Activated T-helper 1 cell treated with anti-CD3 and anti-CD28 coated beads, Interleukin-12 subunit alpha, Interleukin-12 subunit beta, Interleukin-2, Interleukin-4 antibody, amounts not matched to agents 30 ng/mL and 10 ng/mL and 1 ng/mL, durations not matched to agents 14 hours and 24 hours and 36 hours (primary cell): ENCODE measurements at regions of chr5 and their contacts with region 1.

Region 1: GRCh38 chr5:157731272-157732129 is at the start of gene THG1L:
- DNase-seq: peak; percentile 97
- H3K4me3 Mint-ChIP-seq: peak within 1 kb of the TSS; percentile 88
- H3K27ac Mint-ChIP-seq: peak within 1 kb of the TSS; percentile 97
- H3K4me1 Mint-ChIP-seq: peaks cover 37% of the 10 kb centered on the region
- H3K27me3 Mint-ChIP-seq: no peaks in the 10 kb centered on the region
- total RNA-seq, gene THG1L: 26.8 and 30.1 TPM in 2 replicates

Region 2: DNA sequence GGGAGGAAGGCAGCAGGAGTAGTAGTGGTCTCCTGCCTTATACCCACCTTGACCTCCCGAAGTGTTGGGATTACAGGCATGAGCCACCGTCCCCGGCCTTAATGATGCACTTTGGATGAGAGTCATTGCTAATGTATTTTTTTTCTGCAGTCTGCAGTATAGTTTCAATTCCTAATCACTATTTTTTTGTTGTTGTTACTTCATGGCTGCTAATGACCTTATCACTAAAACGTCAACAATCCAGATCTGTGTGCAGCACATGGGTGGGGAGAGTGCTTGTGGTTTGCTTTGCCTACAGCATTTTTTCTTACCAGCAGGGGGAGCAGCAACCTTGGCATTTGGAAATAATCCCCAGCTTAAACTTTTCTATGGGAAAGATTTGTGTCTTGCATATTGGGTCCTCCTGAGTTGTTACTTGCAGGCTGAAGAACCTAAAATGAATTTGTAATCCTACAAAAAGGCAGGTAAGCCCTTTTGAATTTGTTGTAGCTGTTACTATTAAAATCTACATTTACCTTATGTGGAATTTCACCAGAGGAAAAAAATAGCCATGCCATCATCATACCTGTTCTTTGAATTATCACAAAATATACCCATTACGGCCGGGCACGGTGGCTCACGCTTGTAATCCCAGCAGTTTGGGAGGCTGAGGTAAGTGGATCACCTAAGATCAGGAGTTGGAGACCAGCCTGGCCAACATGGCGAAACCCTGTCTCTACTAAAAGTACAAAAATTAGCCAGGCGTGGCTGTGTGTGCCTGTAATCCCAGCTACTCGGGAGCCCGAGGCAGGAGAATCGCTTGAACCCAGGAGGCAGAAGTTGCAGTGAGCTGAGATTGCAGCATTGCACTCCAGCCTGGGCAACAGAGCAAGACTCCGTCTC is 582.5 kb before region 1 on chr5:
- intact Hi-C with region 1: no loop called
- DNase-seq: peak; percentile 74
- H3K4me3 Mint-ChIP-seq: no peak overlapping the region
- H3K27ac Mint-ChIP-seq: peak overlapping the region; percentile 67
- H3K4me1 Mint-ChIP-seq: peaks cover 43% of the 10 kb centered on the region
- H3K27me3 Mint-ChIP-seq: no peaks in the 10 kb centered on the region

Region 3: DNA sequence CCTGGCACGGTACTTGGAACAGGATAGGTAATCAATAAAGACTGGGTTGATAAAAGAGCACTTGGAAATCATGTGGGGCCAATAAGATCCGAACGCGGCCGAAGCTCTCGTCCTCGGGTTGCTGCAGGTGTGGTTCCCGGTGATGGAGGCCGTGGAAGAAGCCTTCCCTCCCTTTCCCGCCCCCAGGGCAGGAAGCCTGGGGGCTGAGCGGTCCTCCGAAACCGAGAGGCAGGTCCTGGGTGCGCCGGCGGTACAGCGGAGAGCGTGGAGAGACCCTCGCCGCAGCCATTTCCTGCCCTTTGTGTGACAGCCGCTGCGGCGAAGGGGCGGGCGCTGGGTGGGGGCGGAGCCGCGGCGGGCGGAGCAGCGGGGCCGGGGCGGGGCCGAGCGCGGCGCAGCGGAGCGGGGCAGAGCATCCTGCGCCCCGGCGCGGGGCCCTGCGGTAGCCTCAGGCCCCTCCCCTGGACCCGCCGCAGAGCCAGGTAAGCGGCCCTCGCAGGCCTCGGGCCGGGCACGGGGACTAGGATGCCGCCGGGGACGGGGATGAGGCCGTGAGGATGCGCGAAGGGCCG is 465.7 kb before region 1 on chr5 and contains the start of gene CYFIP2:
- intact Hi-C with region 1: loop called (anchors 5 kb)
- DNase-seq: peak; percentile 82
- H3K4me3 Mint-ChIP-seq: peak within 1 kb of the TSS; percentile 93
- H3K27ac Mint-ChIP-seq: peak within 1 kb of the TSS; percentile 95
- H3K4me1 Mint-ChIP-seq: peaks cover 78% of the 10 kb centered on the region
- H3K27me3 Mint-ChIP-seq: no peaks in the 10 kb centered on the region
- total RNA-seq, gene CYFIP2: 173 and 175 TPM in 2 replicates

Region 4: GRCh38 chr5:157575381-157576020 is 156.0 kb before region 1 on chr5 and contains the start of gene ADAM19:
- intact Hi-C with region 1: loop called (anchors 2 kb)
- DNase-seq: peak; percentile 58
- H3K4me3 Mint-ChIP-seq: peak within 1 kb of the TSS; percentile 96
- H3K27ac Mint-ChIP-seq: peak within 1 kb of the TSS; percentile 92
- H3K4me1 Mint-ChIP-seq: peaks cover 64% of the 10 kb centered on the region
- H3K27me3 Mint-ChIP-seq: no peaks in the 10 kb centered on the region
- total RNA-seq, gene ADAM19: 341 and 348 TPM in 2 replicates

Region 5: DNA sequence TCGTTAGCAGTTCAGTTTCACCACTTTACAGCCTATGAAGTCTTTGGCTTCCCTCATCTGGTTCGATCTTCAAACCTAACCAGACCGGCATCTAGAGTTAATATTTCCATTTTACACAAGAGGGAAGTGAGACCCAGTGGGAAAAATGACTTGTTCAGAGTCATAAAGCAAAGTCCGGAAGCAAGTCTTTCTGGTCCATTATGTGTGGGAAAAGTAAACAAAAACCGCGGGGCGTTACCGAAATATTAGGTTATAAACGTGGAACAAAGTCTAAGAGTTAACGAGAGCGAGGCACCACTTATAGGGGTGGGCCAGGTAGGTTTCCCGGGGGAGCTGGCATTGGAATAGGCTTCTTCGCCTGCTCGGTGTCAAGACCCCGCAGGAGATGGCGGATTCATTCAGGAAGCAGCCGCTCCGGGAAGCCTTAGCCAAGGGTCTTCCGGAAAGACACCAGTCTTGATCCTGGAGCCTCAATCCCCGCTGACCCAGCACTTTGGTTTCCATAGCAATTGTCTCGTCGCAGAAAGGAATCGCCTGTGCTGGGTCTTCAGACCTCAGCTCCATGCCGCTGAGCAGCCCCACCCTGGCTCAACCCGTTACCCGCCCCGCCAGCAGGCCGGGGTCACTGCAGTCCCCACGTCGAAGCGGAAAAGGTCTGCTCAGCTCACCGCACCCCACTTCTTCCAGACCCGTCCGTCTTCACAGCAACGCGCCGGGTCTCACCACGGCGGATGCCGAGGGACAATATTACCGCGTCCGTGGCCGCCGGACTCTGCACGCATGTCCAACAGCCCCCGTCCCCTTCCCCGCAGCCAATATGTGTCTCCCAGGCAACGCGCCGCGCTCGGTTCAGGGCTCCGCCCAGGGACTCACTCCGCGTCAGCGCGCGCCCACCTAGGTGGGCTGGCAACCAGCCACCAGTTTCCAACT is 60.6 kb before region 1 on chr5 and contains the start of gene C5orf52:
- intact Hi-C with region 1: loop called (anchors 1 kb)
- DNase-seq: no peak
- H3K4me3 Mint-ChIP-seq: peak within 1 kb of the TSS; percentile 93
- H3K27ac Mint-ChIP-seq: peak within 1 kb of the TSS; percentile 82
- H3K4me1 Mint-ChIP-seq: peaks cover 42% of the 10 kb centered on the region
- H3K27me3 Mint-ChIP-seq: peaks cover 2% of the 10 kb centered on the region
- total RNA-seq, gene C5orf52: 0.39 TPM in 1 of 2 replicates, not detected in the other

Region 6: DNA sequence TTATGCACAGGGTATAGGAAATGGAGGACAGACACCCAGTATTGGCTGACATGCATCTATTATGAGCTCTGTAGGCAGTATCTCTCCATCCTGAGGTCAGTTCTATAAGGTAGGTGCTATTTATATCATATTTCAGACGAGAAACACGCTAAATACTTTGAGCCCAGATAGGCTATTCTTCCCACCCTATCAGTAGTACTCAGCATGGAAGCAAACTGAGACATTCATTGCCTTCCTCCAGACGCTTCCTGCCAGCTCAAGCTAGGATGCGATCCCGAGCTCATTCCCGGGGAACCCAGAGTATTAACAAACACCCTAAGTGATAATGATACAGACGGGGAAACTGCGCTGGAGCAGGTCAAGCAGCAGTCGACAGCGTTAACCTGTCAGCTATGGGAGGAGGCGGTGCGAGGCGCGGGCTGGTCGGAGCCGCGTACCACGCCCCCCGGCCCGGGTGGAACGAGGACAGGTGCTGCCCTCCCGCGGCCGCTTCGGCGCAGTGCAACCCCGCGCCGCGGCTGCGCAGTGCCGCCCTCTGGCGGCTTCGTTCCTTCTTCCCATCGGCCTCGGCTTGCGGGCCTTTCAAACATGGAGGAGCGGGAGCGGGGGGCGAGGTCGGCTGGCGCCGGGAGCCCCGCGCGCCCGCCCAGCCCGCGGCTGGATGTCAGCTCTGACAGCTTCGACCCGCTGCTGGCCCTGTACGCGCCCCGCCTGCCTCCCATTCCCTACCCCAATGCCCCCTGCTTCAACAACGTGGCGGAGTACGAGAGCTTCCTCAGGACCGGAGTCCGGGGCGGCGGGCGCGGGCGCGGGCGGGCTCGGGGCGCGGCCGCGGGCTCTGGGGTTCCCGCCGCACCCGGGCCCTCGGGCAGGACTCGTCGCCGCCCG is 11.9 kb after region 1 on chr5 and contains the start of gene LSM11:
- intact Hi-C with region 1: loop called (anchors 1 kb)
- DNase-seq: peak; percentile 90
- H3K4me3 Mint-ChIP-seq: peak within 1 kb of the TSS; percentile 98
- H3K27ac Mint-ChIP-seq: peak within 1 kb of the TSS; percentile 93
- H3K4me1 Mint-ChIP-seq: peaks cover 46% of the 10 kb centered on the region
- H3K27me3 Mint-ChIP-seq: peaks cover 3% of the 10 kb centered on the region
- total RNA-seq, gene LSM11: 8.8 and 9.0 TPM in 2 replicates